ENCODE measurements at regions of chr12 and their contacts with region 1.

Region 1: GRCh38 chr12:122054842-122055520 is 23.6 kb upstream of the MLXIP start:
- DNase-seq: no peak
- ATAC-seq: no peak
- H3K4me3 ChIP-seq: no peak overlapping the region
- H3K27ac ChIP-seq: no peak overlapping the region
- H3K4me1 ChIP-seq: peaks cover 9% of the 10 kb centered on the region
- H3K27me3 ChIP-seq: no peaks in the 10 kb centered on the region
- CTCF ChIP-seq: no peak
- POLR2A ChIP-seq: no peak
- RAD21 ChIP-seq: no peak

Region 2: GRCh38 chr12:121964813-121965643 is 90.0 kb before region 1 on chr12:
- CTCF ChIA-PET with region 1: no interaction called
- POLR2A ChIA-PET with region 1: no interaction called
- dilution Hi-C with region 1: no loop called
- in situ Hi-C with region 1: no loop called
- intact Hi-C with region 1: no loop called
- DNase-seq: peak; percentile 61
- ATAC-seq: peak; percentile 67
- H3K4me3 ChIP-seq: no peak overlapping the region
- H3K27ac ChIP-seq: no peak overlapping the region
- H3K4me1 ChIP-seq: peaks cover 4% of the 10 kb centered on the region
- H3K27me3 ChIP-seq: no peaks in the 10 kb centered on the region
- CTCF ChIP-seq: no peak
- POLR2A ChIP-seq: no peak
- RAD21 ChIP-seq: no peak

Region 3: GRCh38 chr12:122116707-122117535 is 61.9 kb after region 1 on chr12:
- CTCF ChIA-PET with region 1: interaction called, 3 read pairs
- POLR2A ChIA-PET with region 1: no interaction called
- dilution Hi-C with region 1: no loop called
- in situ Hi-C with region 1: loop called (anchors 5 kb)
- intact Hi-C with region 1: no loop called
- DNase-seq: no peak
- ATAC-seq: no peak
- H3K4me3 ChIP-seq: no peak overlapping the region
- H3K27ac ChIP-seq: no peak overlapping the region
- H3K4me1 ChIP-seq: no peaks in the 10 kb centered on the region; the same call in 1 of the 2 replicates
- H3K27me3 ChIP-seq: no peaks in the 10 kb centered on the region
- CTCF ChIP-seq: no peak; the same call in 1 of the 2 replicates
- POLR2A ChIP-seq: no peak
- RAD21 ChIP-seq: no peak

Region 4: GRCh38 chr12:122123051-122123760 is 68.2 kb after region 1 on chr12:
- CTCF ChIA-PET with region 1: interaction called, 8 read pairs
- POLR2A ChIA-PET with region 1: no interaction called
- dilution Hi-C with region 1: no loop called
- in situ Hi-C with region 1: loop called (anchors 5 kb)
- intact Hi-C with region 1: loop called (anchors 1 kb)
- DNase-seq: peak; percentile 66
- ATAC-seq: peak; percentile 79
- H3K4me3 ChIP-seq: no peak overlapping the region
- H3K27ac ChIP-seq: no peak overlapping the region
- H3K4me1 ChIP-seq: peaks cover 7% of the 10 kb centered on the region; the same call in 1 of the 2 replicates
- H3K27me3 ChIP-seq: no peaks in the 10 kb centered on the region
- CTCF ChIP-seq: peak; percentile 79
- POLR2A ChIP-seq: no peak
- RAD21 ChIP-seq: peak; percentile 86

Region 5: GRCh38 chr12:122130150-122130549 is 75.2 kb after region 1 on chr12:
- CTCF ChIA-PET with region 1: interaction called, 6 read pairs
- POLR2A ChIA-PET with region 1: no interaction called
- dilution Hi-C with region 1: no loop called
- in situ Hi-C with region 1: no loop called
- intact Hi-C with region 1: loop called (anchors 2 kb)
- DNase-seq: peak; percentile 48
- ATAC-seq: peak; percentile 5; the same call in 1 of the 2 replicates
- H3K4me3 ChIP-seq: no peak overlapping the region
- H3K27ac ChIP-seq: no peak overlapping the region
- H3K4me1 ChIP-seq: no peaks in the 10 kb centered on the region
- H3K27me3 ChIP-seq: no peaks in the 10 kb centered on the region
- CTCF ChIP-seq: no peak
- POLR2A ChIP-seq: no peak
- RAD21 ChIP-seq: no peak

Region 6: DNA sequence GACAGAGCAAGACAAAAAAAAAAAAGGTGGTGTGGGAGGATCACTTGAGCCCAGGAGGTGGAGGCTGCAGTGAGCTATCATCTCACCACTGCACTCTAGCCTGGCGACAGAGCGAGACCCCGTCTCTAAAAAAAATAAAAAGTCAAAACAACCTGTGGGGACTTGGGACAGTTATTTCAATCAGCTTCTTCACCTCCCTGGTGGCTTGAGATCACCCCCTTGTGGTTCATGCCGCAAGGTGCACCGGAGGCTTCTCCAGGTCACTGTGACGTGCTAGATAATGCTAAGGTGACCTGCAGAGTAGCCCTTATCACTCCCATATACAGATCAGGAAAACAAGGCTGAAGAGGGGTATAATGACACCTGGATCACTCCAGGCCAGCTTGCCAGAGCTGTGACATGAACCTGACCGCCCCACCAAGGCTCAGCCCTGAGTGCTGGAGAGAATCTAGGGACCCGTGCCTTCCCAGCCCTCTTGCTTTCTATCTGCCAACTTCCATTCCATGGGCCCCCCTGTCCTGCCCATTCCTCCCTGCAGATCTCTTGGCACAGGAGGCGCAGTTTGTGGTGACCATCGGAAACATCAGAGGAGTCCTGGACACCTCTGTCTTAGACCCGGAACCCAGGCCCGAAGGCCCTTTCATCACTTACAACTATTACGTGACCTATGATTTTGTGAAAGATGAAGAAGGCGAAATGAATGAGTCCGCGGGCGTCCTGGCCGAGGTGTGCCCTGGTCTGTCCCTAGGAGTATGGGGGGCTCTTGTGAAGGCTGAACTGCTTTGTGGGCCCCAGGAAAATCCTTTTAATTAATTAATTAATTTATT is 136.1 kb after region 1 on chr12:
- CTCF ChIA-PET with region 1: interaction called, 4 read pairs
- POLR2A ChIA-PET with region 1: no interaction called
- dilution Hi-C with region 1: no loop called
- in situ Hi-C with region 1: loop called (anchors 5 kb)
- intact Hi-C with region 1: loop called (anchors 1 kb)
- DNase-seq: peak; percentile 59
- ATAC-seq: peak; percentile 92
- H3K4me3 ChIP-seq: no peak overlapping the region
- H3K27ac ChIP-seq: no peak overlapping the region
- H3K4me1 ChIP-seq: peaks cover 3% of the 10 kb centered on the region; the same call in 1 of the 2 replicates
- H3K27me3 ChIP-seq: no peaks in the 10 kb centered on the region
- CTCF ChIP-seq: peak; percentile 83
- POLR2A ChIP-seq: no peak
- RAD21 ChIP-seq: peak; percentile 88

Region 7: GRCh38 chr12:123034865-123035264 is 979.9 kb after region 1 on chr12:
- CTCF ChIA-PET with region 1: no interaction called
- POLR2A ChIA-PET with region 1: no interaction called
- dilution Hi-C with region 1: no loop called
- in situ Hi-C with region 1: no loop called
- intact Hi-C with region 1: no loop called
- DNase-seq: peak; percentile 82
- ATAC-seq: peak; percentile 87
- H3K4me3 ChIP-seq: no peak overlapping the region
- H3K27ac ChIP-seq: no peak overlapping the region
- H3K4me1 ChIP-seq: 0 out of 2 replicates have a peak, but pooled peaks cover 1% of the 10 kb centered on the region
- H3K27me3 ChIP-seq: no peaks in the 10 kb centered on the region
- CTCF ChIP-seq: no peak
- POLR2A ChIP-seq: no peak
- RAD21 ChIP-seq: no peak

Measured in IMR-90 (cell line).